Activated CD8-positive, alpha-beta memory T cell treated with anti-CD3 and anti-CD28 coated beads, Interleukin-2, amount 10 ng/mL, durations not matched to agents 7 days and 5 days (primary cell): ENCODE measurements at regions of chr5 and their contacts with region 1.

Region 1: DNA sequence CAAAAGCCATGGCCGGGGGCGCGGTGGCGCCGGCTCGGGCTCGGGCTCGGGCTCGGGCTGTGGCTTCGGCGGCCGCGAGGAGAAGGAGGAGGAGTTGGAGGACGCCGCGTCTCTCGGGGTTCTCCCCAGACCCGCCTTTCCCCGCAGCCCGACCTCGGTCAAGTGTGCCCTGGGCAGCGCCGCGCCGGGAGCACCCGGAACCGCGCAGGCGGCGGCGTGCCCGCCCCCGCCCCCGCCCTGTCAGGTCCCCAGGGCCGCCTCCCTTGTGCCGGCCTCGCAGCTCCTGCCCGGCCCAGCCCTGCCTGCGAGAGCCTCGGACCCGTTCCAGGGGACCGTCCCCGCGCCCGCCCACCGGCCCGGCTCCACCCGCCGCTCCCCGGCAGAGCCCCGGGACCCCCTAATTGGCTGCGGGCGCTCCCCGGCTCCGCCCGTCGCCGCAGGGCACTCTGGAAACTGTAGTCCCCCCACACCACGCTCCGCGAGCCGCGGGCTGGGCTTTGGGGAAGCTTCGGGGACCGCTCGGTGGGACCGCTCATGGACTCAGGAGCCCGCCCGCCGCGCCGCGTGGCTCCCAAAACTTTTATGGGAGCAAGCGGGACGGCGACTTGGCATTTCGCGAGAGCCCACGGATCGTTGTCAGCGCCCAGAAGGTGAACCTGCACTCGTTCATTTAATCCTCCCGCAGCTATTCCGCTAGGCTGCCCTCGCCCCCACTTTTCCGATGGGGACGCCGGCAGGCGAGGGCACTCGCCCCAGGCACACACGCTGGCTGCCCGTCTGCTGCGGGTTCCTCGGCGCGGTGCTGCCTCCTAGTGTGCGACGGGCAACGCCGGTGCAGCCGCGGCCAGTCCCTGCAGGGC is at the start of gene STK10:
- DNase-seq: peak; percentile 94
- ATAC-seq: peak; percentile 80
- H3K4me3 Mint-ChIP-seq: peak within 1 kb of the TSS; percentile 94
- H3K27ac Mint-ChIP-seq: peak within 1 kb of the TSS; percentile 90
- H3K4me1 Mint-ChIP-seq: peaks cover 27% of the 10 kb centered on the region
- H3K27me3 Mint-ChIP-seq: no peaks in the 10 kb centered on the region
- total RNA-seq, gene STK10: 223 to 327 TPM

Region 2: DNA sequence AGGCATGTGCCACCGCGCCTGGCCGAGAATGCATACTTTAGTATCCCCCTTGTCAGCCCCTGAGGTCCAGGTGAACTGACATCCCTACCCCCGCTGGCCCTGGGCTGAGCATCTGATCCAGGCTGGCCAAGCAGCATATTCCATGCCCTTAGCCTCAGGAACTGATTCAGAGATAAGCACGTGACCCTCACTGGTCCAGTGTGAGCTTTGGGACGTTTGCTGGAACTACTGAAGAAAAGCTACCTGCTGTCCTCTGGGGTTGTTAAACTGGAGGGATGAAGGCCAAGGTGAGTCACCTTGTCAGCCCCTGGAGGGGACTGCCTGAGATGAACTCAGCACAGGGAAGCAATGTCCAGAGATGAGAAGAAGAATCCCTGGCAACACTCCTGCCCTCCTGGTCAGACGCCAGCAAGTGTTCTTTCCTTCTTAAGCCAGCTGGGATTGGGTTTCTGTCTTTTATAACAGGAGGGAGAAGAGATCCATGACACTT is 122.7 kb before region 1 on chr5:
- CTCF ChIA-PET with region 1: interaction called, 23 read pairs
- DNase-seq: no peak
- ATAC-seq: no peak
- H3K4me3 Mint-ChIP-seq: no peak overlapping the region
- H3K27ac Mint-ChIP-seq: peak overlapping the region; percentile 78
- H3K4me1 Mint-ChIP-seq: peaks cover 42% of the 10 kb centered on the region
- H3K27me3 Mint-ChIP-seq: no peaks in the 10 kb centered on the region

Region 3: GRCh38 chr5:172106511-172107356 is 81.5 kb before region 1 on chr5:
- CTCF ChIA-PET with region 1: interaction called, 257 read pairs
- DNase-seq: peak; percentile 68
- ATAC-seq: no peak
- H3K4me3 Mint-ChIP-seq: no peak overlapping the region
- H3K27ac Mint-ChIP-seq: peak overlapping the region; percentile 80
- H3K4me1 Mint-ChIP-seq: peaks cover 56% of the 10 kb centered on the region
- H3K27me3 Mint-ChIP-seq: no peaks in the 10 kb centered on the region

Region 4: DNA sequence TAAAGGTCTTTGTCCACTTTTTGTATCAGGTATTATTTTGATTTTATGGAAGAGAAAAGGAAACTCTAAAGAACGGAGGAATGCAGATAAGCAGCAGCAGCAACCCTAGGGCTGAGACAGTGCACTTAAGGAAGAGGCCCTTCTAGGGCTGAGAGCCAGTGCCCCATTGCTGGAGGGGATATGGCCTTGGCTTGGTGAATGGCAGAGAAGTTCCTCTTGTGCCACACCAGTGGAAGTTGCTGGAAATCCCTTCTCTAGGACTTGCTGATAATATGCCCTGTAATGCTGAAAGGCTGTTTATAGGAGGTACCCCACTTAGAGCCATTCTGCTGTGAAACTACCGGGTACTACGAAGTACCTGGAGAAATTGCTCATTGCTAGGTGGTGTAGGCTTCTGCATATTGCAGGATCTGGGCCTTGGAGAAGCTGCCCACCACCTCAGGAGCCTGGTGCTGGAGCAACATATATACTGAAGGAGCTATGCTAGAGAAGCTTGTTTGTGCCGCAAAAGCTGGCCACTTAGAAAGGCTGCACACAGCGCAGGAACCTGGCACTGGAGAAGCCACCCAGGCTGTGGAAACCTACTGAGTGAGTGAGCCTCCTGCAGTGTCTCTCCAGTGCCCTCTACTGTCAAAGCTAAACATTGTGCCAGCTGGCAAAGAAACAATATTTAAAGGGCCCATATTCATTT is 104.9 kb after region 1 on chr5:
- CTCF ChIA-PET with region 1: interaction called, 15 read pairs
- DNase-seq: peak; percentile 76
- ATAC-seq: peak; percentile 99
- H3K4me3 Mint-ChIP-seq: no peak overlapping the region
- H3K27ac Mint-ChIP-seq: no peak overlapping the region
- H3K4me1 Mint-ChIP-seq: peaks cover 2% of the 10 kb centered on the region
- H3K27me3 Mint-ChIP-seq: peaks cover 9% of the 10 kb centered on the region

Region 5: DNA sequence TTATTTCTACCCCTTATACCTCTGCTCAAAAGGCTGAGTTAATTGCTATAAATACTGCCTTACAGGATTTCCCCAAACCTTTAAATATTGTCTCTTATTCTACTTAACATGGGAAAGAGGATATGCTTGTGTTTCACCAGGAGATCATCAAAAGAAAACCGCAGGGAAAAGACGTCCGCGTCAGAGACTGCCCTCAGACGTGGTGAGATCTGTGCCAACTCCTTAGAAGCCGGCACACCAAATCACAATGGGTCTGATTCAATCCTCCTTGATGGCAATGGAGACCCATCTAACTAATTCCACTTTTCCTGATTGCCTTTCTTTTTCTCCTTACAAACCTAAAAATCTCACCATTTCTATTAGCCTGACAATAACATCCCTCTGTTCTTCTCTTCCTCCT is 211.1 kb after region 1 on chr5:
- CTCF ChIA-PET with region 1: no interaction called
- DNase-seq: no peak
- ATAC-seq: no peak
- H3K4me3 Mint-ChIP-seq: no peak overlapping the region
- H3K27ac Mint-ChIP-seq: no peak overlapping the region
- H3K4me1 Mint-ChIP-seq: peaks cover 9% of the 10 kb centered on the region
- H3K27me3 Mint-ChIP-seq: peaks cover 12% of the 10 kb centered on the region